Transverse colon (tissue), 4 donors: ENCODE measurements at regions of chr9 and their contacts with region 1.

Region 1: DNA sequence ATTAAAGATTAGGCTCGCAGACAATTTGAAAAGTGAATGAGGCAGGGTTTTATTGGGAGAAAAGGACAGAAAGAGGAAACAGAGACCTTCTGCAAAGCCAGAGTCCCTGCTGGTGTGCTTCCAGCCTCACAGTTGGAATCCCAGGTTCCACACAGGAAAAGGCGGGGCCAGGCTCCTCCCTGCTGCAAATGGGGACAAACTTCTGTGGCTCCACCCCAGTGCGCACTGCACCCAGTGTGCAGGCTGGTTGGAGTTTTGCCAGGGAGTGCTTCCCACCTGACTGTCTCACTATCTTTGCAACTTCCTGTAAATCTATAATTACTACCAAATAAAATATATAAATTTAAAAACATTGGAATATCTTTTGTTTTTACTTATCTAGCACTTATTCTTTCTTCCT is 386.0 kb upstream of the GRIN3A start:
- DNase-seq: no peak
- H3K4me3 ChIP-seq: no peak overlapping the region
- H3K27ac ChIP-seq: no peak overlapping the region
- H3K4me1 ChIP-seq: no peaks in the 10 kb centered on the region
- H3K27me3 ChIP-seq: no peaks in the 10 kb centered on the region
- CTCF ChIP-seq: no peak
- EP300 ChIP-seq: no peak
- POLR2A ChIP-seq: no peak

Region 2: GRCh38 chr9:102164247-102164646 is 39.8 kb after region 1 on chr9:
- in situ Hi-C with region 1: no loop called
- intact Hi-C with region 1: no loop called
- DNase-seq: no peak
- H3K4me3 ChIP-seq: no peak overlapping the region
- H3K27ac ChIP-seq: no peak overlapping the region
- H3K4me1 ChIP-seq: no peaks in the 10 kb centered on the region
- H3K27me3 ChIP-seq: no peaks in the 10 kb centered on the region
- CTCF ChIP-seq: no peak
- EP300 ChIP-seq: no peak
- POLR2A ChIP-seq: no peak

Region 3: GRCh38 chr9:102209176-102209575 is 84.7 kb after region 1 on chr9:
- in situ Hi-C with region 1: loop called in 1 of 4 experiments (anchors 25 kb)
- intact Hi-C with region 1: no loop called
- DNase-seq: no peak
- H3K4me3 ChIP-seq: no peak overlapping the region
- H3K27ac ChIP-seq: no peak overlapping the region
- H3K4me1 ChIP-seq: no peaks in the 10 kb centered on the region
- H3K27me3 ChIP-seq: no peaks in the 10 kb centered on the region
- CTCF ChIP-seq: no peak
- EP300 ChIP-seq: no peak
- POLR2A ChIP-seq: no peak